Mammary epithelial cell (primary cell): ENCODE measurements at regions of chrX and their contacts with region 1.

Region 1: GRCh38 chrX:132615391-132616131 is 126.7 kb upstream of the MBNL3 start:
- DNase-seq: peak; percentile 37
- H3K4me3 ChIP-seq: no peak overlapping the region
- H3K27ac ChIP-seq: no peak overlapping the region
- H3K4me1 ChIP-seq: no peaks in the 10 kb centered on the region
- H3K27me3 ChIP-seq: no peaks in the 10 kb centered on the region
- CTCF ChIP-seq: peak; percentile 29 to 45

Region 2: GRCh38 chrX:131841496-131842410 is 773.8 kb before region 1 on chrX:
- CTCF ChIA-PET with region 1: no interaction called
- dilution Hi-C with region 1: no loop called
- in situ Hi-C with region 1: no loop called
- intact Hi-C with region 1: loop called (anchors 5 kb)
- DNase-seq: peak; percentile 54
- H3K4me3 ChIP-seq: no peak overlapping the region
- H3K27ac ChIP-seq: no peak overlapping the region
- H3K4me1 ChIP-seq: no peaks in the 10 kb centered on the region
- H3K27me3 ChIP-seq: no peaks in the 10 kb centered on the region
- CTCF ChIP-seq: peak; percentile 87 to 92

Region 3: GRCh38 chrX:132022967-132023895 is 592.3 kb before region 1 on chrX and contains the start of gene STK26:
- CTCF ChIA-PET with region 1: no interaction called
- dilution Hi-C with region 1: no loop called
- in situ Hi-C with region 1: no loop called
- intact Hi-C with region 1: loop called (anchors 10 kb)
- DNase-seq: peak; percentile 76
- H3K4me3 ChIP-seq: peak within 1 kb of the TSS; percentile 66 to 86 (median 71)
- H3K27ac ChIP-seq: peak within 1 kb of the TSS; percentile 55
- H3K4me1 ChIP-seq: no peaks in the 10 kb centered on the region
- H3K27me3 ChIP-seq: no peaks in the 10 kb centered on the region
- CTCF ChIP-seq: no peak
- total RNA-seq, gene STK26: 45.3 to 72.7 TPM

Region 4: DNA sequence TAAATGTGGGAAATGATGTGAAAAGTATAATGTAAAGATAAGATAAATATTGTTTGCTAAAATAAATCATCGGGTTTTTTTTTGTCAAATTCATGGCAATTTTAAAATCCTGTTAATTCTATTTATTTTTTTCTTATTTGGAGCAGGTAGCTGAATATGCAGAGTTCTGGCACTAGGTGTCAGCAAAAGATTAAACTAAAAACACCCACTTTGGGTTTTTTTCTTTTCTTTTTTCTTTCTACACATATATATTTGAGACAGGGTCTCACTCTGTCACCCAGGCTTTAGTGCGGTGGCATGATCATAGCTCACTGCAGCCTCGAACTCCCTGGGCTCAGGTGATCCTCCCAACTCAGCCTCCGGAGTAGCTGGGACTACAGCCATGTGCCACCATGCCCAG is 389.4 kb before region 1 on chrX:
- CTCF ChIA-PET with region 1: no interaction called
- dilution Hi-C with region 1: no loop called
- in situ Hi-C with region 1: loop called in 1 of 2 experiments (anchors 10 kb)
- intact Hi-C with region 1: loop called (anchors 1 kb)
- DNase-seq: no peak
- H3K4me3 ChIP-seq: no peak overlapping the region
- H3K27ac ChIP-seq: no peak overlapping the region
- H3K4me1 ChIP-seq: no peaks in the 10 kb centered on the region
- H3K27me3 ChIP-seq: no peaks in the 10 kb centered on the region
- CTCF ChIP-seq: peak; percentile 25 to 48

Region 5: GRCh38 chrX:132389480-132389879 is 226.1 kb before region 1 on chrX:
- CTCF ChIA-PET with region 1: no interaction called
- dilution Hi-C with region 1: no loop called
- in situ Hi-C with region 1: no loop called
- intact Hi-C with region 1: loop called (anchors 10 kb)
- DNase-seq: no peak
- H3K4me3 ChIP-seq: no peak overlapping the region
- H3K27ac ChIP-seq: no peak overlapping the region
- H3K4me1 ChIP-seq: no peaks in the 10 kb centered on the region
- H3K27me3 ChIP-seq: no peaks in the 10 kb centered on the region
- CTCF ChIP-seq: no peak

Region 6: DNA sequence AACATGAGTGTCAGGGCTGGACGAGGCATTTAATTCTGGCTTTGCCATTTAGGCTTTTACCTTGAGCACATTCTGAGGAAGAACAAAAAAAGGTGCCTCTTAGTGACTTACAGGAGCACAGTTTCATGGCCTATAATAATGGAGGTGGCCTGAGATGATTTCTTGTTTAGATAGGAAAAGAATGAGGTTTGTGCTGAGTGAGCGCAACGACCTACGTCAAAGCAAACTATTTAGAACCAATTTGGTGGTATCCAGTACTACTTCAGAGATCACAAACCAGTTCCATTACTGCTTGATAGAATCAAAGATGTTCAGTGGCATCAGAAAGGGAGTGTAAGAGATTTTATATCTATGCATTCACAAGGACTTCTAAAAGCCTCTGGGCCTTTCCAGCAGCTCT is 32.3 kb before region 1 on chrX:
- CTCF ChIA-PET with region 1: no interaction called
- dilution Hi-C with region 1: no loop called
- in situ Hi-C with region 1: no loop called
- intact Hi-C with region 1: no loop called
- DNase-seq: no peak
- H3K4me3 ChIP-seq: no peak overlapping the region
- H3K27ac ChIP-seq: no peak overlapping the region
- H3K4me1 ChIP-seq: no peaks in the 10 kb centered on the region
- H3K27me3 ChIP-seq: peaks cover 9% of the 10 kb centered on the region
- CTCF ChIP-seq: no peak

Region 7: DNA sequence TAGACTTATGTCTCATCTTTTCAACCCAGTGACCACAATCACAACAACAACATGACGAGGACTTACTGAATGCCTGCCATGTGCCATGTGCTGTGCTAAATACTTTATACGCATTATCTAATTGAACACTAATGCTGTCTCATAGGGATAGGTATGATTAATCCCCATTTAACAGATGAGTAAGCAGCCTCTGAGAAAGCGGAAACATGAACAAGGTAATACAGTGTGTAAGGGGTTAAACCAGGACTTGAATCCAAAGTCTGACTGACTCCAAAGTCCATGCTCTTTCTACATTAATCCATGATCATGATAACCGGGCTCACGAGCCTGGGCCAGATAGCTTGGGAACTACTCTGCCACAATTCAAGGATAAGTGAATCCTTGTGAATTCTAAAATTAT is 21.4 kb before region 1 on chrX:
- CTCF ChIA-PET with region 1: no interaction called
- dilution Hi-C with region 1: no loop called
- in situ Hi-C with region 1: no loop called
- intact Hi-C with region 1: no loop called
- DNase-seq: peak; percentile 34
- H3K4me3 ChIP-seq: no peak overlapping the region
- H3K27ac ChIP-seq: no peak overlapping the region
- H3K4me1 ChIP-seq: no peaks in the 10 kb centered on the region
- H3K27me3 ChIP-seq: no peaks in the 10 kb centered on the region
- CTCF ChIP-seq: no peak